Activated naive CD4-positive, alpha-beta T cell treated with anti-CD3 and anti-CD28 coated beads for 36 hours (primary cell): ENCODE measurements at regions of chr12 and their contacts with region 1.

Region 1: GRCh38 chr12:105053116-105053572 is 31.1 kb downstream of the ALDH1L2 start:
- DNase-seq: peak; percentile 89
- H3K4me3 Mint-ChIP-seq: no peak overlapping the region
- H3K27ac Mint-ChIP-seq: no peak overlapping the region
- H3K4me1 Mint-ChIP-seq: no peaks in the 10 kb centered on the region
- H3K27me3 Mint-ChIP-seq: no peaks in the 10 kb centered on the region

Region 2: GRCh38 chr12:104201238-104202001 is 851.7 kb before region 1 on chr12:
- CTCF ChIA-PET with region 1: no interaction called
- intact Hi-C with region 1: loop called (anchors 1 kb)
- DNase-seq: peak; percentile 64
- H3K4me3 Mint-ChIP-seq: no peak overlapping the region
- H3K27ac Mint-ChIP-seq: no peak overlapping the region
- H3K4me1 Mint-ChIP-seq: peaks cover 2% of the 10 kb centered on the region
- H3K27me3 Mint-ChIP-seq: peaks cover 7% of the 10 kb centered on the region

Region 3: DNA sequence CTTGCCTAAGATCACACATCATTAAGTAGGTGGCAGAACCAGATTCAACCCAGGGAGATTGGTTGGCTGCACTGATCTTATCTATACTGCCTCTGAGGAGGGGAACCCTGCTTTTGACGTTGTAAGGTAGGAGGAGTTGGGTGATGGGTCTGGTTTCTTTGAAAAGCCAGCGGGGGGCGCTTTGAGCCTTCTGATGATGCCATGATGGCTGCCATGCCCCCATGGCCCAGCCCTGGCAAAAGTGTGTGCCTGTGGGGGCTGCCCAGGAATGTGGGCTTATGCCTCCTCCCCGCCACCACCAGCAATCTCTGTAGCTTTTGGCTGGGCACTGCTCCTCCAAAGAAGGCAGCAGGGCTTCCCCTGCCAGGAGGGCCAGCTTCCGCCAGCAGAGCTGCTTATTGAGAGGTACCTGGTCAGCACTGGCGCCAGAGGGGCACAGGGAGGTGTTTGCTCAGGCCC is 319.4 kb before region 1 on chr12:
- CTCF ChIA-PET with region 1: no interaction called
- intact Hi-C with region 1: loop called (anchors 5 kb)
- DNase-seq: peak; percentile 61
- H3K4me3 Mint-ChIP-seq: no peak overlapping the region
- H3K27ac Mint-ChIP-seq: no peak overlapping the region
- H3K4me1 Mint-ChIP-seq: peaks cover 41% of the 10 kb centered on the region
- H3K27me3 Mint-ChIP-seq: no peaks in the 10 kb centered on the region

Region 4: GRCh38 chr12:104877123-104877705 is 175.9 kb before region 1 on chr12:
- CTCF ChIA-PET with region 1: interaction called, 3 read pairs
- intact Hi-C with region 1: loop called (anchors 2 kb)
- DNase-seq: peak; percentile 59
- H3K4me3 Mint-ChIP-seq: no peak overlapping the region
- H3K27ac Mint-ChIP-seq: no peak overlapping the region
- H3K4me1 Mint-ChIP-seq: peaks cover 3% of the 10 kb centered on the region
- H3K27me3 Mint-ChIP-seq: peaks cover 2% of the 10 kb centered on the region

Region 5: DNA sequence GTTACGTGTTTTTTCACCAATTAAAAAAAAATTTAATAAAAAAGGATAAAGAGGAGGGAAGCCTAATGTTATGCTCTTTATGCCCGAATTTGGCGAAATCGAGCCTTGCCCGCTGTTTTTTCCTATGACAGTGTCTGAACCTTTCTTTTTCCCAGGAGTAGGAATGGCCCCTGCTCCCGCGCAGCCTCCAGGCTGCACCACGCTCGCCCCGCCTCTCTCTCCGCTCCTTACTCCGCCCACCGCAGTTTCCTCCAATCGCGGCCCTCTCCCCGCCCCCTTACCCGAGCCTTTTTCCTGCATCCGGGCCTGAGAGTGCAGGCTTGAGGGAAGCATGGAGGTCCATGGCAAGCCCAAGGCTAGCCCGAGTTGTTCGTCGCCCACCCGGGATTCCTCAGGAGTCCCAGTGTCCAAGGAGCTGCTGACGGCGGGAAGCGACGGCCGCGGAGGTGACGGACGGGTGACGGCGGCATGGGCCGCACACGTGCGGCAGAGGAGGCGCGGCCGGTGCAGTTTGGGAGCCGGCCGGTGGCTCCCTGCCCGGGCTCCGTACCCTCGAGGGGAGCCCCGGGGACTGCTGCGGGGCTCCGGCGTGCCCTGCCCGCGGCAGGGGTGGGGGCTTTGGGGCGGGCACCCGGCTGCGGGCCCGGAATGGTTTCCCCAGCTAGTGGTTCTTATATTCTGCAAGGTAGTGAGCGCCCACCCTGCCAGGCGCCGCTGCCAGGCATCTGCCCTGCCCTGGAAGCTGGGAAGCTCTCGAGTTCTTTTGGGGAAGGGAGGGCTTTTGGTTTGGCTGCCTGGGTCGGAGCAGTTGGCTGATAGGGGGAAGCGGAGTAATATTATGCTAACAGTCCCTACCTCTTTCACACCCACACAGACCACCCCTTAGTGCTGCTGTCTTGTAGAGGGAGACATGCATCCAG is 66.9 kb before region 1 on chr12 and contains the start of gene NOPCHAP1:
- CTCF ChIA-PET with region 1: no interaction called
- intact Hi-C with region 1: loop called (anchors 5 kb)
- DNase-seq: peak; percentile 91
- H3K4me3 Mint-ChIP-seq: peak within 1 kb of the TSS; percentile 86
- H3K27ac Mint-ChIP-seq: peak within 1 kb of the TSS; percentile 17
- H3K4me1 Mint-ChIP-seq: peaks cover 40% of the 10 kb centered on the region
- H3K27me3 Mint-ChIP-seq: no peaks in the 10 kb centered on the region
- total RNA-seq, gene NOPCHAP1: 30.8 to 33.4 TPM

Region 6: DNA sequence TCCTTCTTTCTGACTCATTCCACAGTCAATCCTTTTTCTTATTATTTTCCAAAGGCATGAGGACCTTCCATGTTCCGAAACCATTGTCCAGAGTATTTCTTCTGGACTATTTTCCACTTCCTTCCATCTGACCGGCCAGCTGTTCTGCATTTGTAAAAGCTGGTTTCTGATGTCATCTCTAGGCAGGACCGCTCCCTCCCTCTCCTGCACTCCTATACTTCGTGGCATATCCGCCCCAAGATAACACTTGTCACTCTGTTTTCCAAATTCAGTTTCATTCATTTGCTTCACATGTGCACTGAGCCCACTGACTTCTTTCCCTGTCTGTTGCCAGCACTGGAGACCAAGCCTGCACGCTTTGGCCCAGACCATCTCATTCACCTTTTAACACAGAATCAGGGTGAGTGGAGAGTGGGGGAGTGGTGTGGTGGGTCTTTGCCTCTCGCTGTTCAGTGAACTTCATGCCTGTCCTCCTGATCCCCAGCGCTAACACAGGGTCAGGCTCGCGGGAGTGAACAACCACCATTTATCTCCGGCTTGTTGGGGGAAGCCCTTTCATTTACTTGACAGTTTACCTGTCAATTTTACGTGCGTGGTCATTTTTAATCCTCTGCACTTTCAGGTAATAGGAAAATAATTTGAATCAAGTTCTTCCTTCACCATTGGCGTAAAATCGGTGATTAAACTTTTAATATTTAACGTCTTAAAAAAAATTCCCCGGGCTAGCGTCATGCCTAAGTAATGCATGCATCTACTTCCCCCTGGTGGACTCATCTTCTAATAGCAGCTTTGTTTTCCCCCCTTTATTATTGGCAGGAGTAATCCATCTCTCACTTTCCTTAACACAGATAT is 329.9 kb after region 1 on chr12:
- CTCF ChIA-PET with region 1: interaction called, 3 read pairs
- intact Hi-C with region 1: loop called (anchors 5 kb)
- DNase-seq: peak; percentile 31
- H3K4me3 Mint-ChIP-seq: no peak overlapping the region
- H3K27ac Mint-ChIP-seq: no peak overlapping the region
- H3K4me1 Mint-ChIP-seq: no peaks in the 10 kb centered on the region
- H3K27me3 Mint-ChIP-seq: no peaks in the 10 kb centered on the region